Mammary epithelial cell (primary cell): ENCODE measurements at regions of chr4 and their contacts with region 1.

Region 1: DNA sequence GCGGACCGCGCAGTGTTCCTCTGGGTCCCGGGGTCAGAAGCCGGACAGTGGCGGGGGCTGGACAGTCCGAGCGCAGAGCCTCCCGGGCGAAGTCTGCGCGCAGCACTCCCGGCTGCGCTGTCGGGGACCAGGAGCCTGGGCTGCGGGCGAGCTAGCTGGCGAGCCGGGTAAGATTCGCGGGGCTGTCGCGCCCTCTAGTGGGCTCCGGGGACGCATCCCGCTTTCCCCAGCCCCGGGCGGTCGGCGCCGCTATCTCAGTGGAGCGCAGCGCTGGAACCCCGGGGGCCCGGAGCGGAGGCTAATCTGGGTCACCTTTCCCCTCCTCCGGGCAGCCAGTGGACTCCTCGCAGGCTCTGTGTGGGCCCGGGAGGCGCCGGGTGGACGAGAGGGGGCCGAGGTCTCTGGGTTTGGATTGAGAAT is 4.2 kb downstream of the PDGFRA start:
- DNase-seq: peak; percentile 81
- H3K4me3 ChIP-seq: peak overlapping the region; percentile 30 to 54 (median 52)
- H3K27ac ChIP-seq: no peak overlapping the region
- H3K4me1 ChIP-seq: peaks cover 21% of the 10 kb centered on the region
- H3K27me3 ChIP-seq: peaks cover 24% of the 10 kb centered on the region
- CTCF ChIP-seq: peak; percentile 36 to 88

Region 2: DNA sequence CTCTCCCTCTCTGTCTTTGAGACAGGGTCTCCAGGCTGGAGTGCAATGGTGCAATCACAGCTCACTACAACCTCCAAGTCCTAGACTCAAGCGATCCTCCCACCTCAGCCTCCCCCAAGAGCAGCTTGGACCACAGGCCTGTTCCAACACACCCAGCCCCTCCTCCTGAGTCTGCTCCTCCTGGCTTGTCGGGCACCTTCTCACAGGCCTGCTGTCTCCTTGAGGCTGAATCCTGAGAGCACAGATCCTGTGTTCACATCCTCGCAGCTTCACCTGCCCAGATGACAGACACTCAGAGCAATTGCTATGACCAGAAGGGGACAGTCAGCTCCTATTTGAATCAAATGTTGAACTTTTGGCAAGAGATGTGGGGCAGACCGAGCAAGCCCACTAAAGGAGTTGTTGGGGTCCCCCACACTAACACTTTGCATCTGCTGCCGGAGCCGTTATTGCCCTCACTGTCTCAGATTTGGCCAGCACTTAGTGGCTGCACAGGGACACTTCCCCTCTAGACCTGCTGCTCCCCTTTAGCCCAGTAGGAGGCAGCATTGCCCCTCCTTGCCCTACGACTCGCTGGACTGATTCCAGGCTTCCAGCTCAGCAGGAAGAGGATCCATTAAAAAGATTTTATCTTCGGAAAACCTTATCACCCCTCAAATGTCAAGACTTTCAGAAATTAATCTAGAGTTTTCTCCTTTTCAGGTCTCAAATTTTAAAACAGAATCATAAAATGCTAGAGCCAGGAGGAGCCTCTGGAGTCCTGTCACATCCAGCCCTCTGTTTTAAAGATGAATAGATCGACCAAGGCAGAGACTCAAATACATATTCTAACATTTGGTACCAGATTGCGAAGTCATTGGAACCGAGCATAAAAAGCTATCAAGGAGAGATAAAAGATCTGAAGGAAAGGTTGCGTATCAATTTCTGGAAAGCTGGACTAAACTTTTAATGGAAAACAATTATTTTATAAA is 1687.9 kb before region 1 on chr4:
- CTCF ChIA-PET with region 1: no interaction called
- dilution Hi-C with region 1: no loop called
- in situ Hi-C with region 1: no loop called
- intact Hi-C with region 1: loop called (anchors 5 kb)
- DNase-seq: peak; percentile 49
- H3K4me3 ChIP-seq: no peak overlapping the region
- H3K27ac ChIP-seq: no peak overlapping the region
- H3K4me1 ChIP-seq: peaks cover 16% of the 10 kb centered on the region
- H3K27me3 ChIP-seq: no peaks in the 10 kb centered on the region
- CTCF ChIP-seq: peak; percentile 98

Region 3: DNA sequence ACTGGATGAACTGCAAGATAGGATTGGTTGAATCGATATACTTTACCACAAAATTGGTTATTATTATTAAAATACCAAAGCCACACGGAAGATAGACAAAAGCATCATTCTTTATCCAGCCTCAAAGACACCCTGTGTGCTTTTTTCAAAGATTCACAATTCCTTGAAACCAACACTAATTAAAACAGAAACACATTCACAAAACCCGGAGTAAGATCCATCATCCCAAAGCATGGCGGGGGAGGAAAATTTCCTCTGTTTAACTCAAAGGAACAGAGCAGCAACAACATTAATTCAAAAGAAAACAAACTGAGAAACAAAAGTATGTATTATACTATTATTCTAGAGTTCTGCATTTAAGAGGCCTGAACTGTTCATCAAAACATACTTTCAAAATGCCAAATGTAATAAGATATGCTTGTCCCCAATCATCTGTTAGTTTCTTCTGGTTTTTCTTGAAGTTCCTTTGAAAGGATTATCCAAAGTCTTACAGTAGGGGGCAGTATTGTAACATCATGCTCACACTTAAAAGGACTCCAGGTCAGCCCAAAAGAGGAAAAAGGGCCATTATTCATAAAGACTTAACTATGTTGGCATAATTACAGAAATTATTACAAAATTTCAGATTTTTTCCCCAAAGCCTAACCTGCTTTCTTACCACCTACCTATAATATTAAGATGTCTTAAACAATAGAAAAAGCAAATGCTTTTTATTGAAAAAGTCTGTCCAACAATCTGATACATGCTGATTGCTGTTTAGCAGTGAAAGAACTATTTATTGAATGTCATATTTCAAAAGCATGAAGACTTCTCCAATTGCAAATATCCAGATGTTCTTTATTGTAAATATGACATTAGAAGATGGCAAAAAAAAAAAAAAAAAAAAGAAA is 1036.2 kb before region 1 on chr4:
- CTCF ChIA-PET with region 1: no interaction called
- dilution Hi-C with region 1: no loop called
- in situ Hi-C with region 1: loop called (anchors 5 to 10 kb)
- intact Hi-C with region 1: loop called (anchors 1 kb)
- DNase-seq: peak; percentile 47
- H3K4me3 ChIP-seq: no peak overlapping the region
- H3K27ac ChIP-seq: no peak overlapping the region
- H3K4me1 ChIP-seq: no peaks in the 10 kb centered on the region
- H3K27me3 ChIP-seq: no peaks in the 10 kb centered on the region
- CTCF ChIP-seq: peak; percentile 48 to 75

Region 4: DNA sequence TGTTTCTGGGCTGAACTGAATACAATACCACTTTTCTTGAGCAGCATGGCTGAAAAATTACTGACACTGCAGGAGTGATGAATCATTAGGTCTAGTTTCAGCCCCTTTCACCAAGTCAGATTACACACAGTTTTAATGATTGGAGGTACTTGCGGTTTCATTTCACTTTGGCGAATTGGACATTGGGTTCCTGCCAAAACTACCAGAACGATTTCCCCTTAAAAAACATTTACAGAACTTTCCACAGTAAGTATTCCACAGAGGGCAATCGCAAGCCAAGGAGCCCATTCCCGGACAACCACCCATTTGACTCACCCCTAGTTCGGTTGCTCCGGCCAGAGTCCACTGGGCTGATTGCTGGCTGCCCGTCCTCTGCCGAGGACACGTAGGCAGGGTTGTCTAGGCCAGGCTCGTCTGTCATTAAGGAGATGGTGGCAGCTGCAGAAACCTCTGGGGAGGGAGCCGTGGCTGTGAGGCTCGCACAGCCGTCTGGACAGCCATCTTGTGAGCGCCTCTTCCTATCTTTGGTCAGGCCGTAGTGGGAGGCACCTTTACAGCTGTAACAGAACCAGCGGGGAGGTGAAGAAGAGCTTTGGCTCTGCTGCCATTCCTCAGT is 725.5 kb before region 1 on chr4:
- CTCF ChIA-PET with region 1: no interaction called
- dilution Hi-C with region 1: no loop called
- in situ Hi-C with region 1: loop called in 1 of 2 experiments (anchors 25 kb)
- intact Hi-C with region 1: loop called (anchors 1 kb)
- DNase-seq: no peak
- H3K4me3 ChIP-seq: no peak overlapping the region
- H3K27ac ChIP-seq: no peak overlapping the region
- H3K4me1 ChIP-seq: no peaks in the 10 kb centered on the region
- H3K27me3 ChIP-seq: peaks cover 2% of the 10 kb centered on the region
- CTCF ChIP-seq: no peak

Region 5: DNA sequence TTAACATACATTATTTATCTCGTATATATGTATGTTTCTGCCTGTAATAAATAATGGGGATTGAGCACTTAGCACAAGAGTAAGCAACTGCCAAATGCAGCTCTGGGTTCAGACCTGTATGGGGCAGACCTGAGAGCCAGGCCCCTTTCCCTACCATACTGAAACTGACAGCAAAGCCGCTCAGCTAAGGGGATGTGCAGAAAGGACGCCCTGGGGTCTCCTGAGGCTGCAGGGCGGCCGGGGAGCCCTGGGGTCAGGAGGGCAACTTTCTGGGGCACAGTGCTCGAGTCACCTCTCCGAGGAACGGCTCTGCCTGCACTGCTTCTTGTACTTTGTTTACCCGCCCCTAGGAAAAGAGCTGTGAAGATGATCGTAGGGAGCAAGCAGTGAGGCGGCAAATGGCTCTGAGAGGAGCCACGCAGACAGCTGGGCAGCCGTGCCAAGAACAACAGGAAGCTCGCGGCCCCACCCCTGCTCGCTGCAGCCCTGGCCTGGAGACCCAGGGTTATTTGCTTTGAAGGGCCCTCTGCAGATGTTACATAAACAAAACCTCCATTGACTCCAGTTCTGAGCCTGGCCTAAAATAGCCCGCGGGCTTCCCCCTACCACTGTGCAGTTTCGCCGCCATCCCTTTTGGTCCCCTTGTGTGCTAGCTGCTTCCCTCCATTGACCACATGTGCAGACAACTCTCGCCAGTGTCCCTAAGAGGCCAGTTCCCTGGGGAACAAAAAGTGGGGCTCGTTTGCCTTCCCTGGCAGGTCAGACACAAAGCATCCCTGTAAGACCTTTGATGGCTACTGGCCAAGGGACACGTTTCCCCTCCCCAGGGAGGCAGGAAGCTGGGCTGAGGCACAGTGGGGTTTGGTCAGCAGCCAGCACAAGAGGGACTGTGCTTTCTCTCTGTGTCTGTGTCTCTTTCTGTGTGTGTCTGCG is 530.7 kb before region 1 on chr4:
- CTCF ChIA-PET with region 1: interaction called, 8 read pairs
- dilution Hi-C with region 1: no loop called
- in situ Hi-C with region 1: loop called (anchors 10 kb)
- intact Hi-C with region 1: loop called (anchors 1 kb)
- DNase-seq: peak; percentile 52
- H3K4me3 ChIP-seq: peak overlapping the region in 2 of 3 experiments; percentile 17 to 20
- H3K27ac ChIP-seq: no peak overlapping the region
- H3K4me1 ChIP-seq: peaks cover 11% of the 10 kb centered on the region
- H3K27me3 ChIP-seq: no peaks in the 10 kb centered on the region
- CTCF ChIP-seq: peak in 1 of 2 donors; percentile 7

Region 6: DNA sequence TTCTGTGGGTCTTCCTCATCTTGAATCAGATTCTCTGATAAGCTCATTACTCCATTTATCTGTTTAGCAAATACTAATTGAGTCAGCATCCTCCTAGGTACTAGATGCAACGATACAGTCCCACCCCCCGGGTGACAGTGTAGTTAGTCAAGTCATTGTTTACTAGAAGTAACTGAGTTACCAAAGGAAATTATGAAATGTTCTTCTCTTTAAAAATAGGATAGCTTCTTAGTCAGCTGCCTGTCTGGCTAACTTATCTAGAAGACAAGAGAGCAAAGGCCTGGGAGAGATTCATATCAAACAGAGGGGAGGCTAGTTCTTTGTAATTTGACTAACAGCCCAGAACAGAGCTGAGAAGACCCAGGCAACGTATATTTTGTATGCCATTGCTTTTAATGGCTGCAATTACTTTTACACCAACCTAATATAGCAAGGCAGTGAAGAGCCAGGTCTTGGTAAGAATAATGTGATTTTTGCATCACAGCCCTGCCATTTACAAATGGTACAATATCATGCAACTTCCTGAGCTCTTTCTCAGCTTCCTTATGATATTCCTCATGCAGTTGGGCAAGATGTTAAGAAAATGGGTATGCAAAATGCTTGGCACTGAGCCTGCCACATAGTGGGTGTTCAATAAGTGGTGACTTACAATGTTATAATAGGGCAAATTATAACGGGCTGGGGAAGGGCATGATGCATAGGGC is 318.8 kb before region 1 on chr4:
- CTCF ChIA-PET with region 1: interaction called, 18 read pairs
- dilution Hi-C with region 1: no loop called
- in situ Hi-C with region 1: loop called in 1 of 2 experiments (anchors 5 kb)
- intact Hi-C with region 1: no loop called
- DNase-seq: peak; percentile 97
- H3K4me3 ChIP-seq: no peak overlapping the region
- H3K27ac ChIP-seq: peak overlapping the region; percentile 99
- H3K4me1 ChIP-seq: peaks cover 69% of the 10 kb centered on the region
- H3K27me3 ChIP-seq: no peaks in the 10 kb centered on the region
- CTCF ChIP-seq: no peak

Region 7: DNA sequence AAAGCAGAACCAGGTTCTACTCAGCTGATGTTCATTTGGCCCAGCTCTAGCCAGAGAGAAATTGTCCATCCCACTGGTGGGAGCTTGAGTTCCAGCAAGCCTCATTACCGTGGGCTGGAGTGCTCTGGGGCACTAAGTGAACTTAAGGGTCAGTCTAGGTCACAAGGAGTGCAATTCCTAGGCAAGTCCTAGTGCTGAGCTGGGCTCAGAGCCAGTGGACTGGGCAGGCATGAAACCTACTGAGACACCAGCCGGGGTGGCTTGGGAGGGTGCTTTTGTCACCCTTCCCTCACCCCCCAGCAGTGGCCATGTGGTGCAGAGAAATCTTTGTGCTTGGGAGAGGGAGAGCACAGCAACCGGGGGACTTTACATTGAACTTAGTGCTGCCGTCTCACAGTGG is 94.0 kb before region 1 on chr4:
- CTCF ChIA-PET with region 1: no interaction called
- dilution Hi-C with region 1: no loop called
- in situ Hi-C with region 1: no loop called
- intact Hi-C with region 1: no loop called
- DNase-seq: no peak
- H3K4me3 ChIP-seq: no peak overlapping the region
- H3K27ac ChIP-seq: no peak overlapping the region
- H3K4me1 ChIP-seq: no peaks in the 10 kb centered on the region
- H3K27me3 ChIP-seq: no peaks in the 10 kb centered on the region
- CTCF ChIP-seq: no peak

Region 8: DNA sequence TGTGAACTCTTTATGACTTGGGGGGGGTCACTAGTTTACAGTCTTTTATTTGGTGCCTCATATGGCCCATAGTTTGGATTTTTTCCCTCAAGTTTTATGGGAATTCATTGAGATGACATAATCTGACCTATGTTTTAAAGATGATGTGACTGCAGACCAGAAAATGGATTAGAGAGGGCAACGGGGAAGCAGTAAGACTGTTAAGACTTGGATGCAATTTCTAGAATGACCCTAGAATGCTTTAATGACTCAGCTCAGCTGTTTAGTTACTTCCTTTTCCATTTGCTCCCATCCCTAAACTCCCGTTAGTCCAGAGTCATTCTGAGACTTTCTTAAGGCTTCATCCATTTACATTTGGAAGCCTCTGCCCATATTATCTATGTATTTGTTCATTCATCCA is 64.1 kb before region 1 on chr4:
- CTCF ChIA-PET with region 1: no interaction called
- dilution Hi-C with region 1: no loop called
- in situ Hi-C with region 1: no loop called
- intact Hi-C with region 1: no loop called
- DNase-seq: no peak
- H3K4me3 ChIP-seq: no peak overlapping the region
- H3K27ac ChIP-seq: no peak overlapping the region
- H3K4me1 ChIP-seq: peaks cover 19% of the 10 kb centered on the region
- H3K27me3 ChIP-seq: no peaks in the 10 kb centered on the region
- CTCF ChIP-seq: no peak

Region 9: GRCh38 chr4:54359919-54360650 is 126.8 kb after region 1 on chr4:
- CTCF ChIA-PET with region 1: no interaction called
- dilution Hi-C with region 1: no loop called
- in situ Hi-C with region 1: no loop called
- intact Hi-C with region 1: no loop called
- DNase-seq: no peak
- H3K4me3 ChIP-seq: no peak overlapping the region
- H3K27ac ChIP-seq: no peak overlapping the region
- H3K4me1 ChIP-seq: no peaks in the 10 kb centered on the region
- H3K27me3 ChIP-seq: no peaks in the 10 kb centered on the region
- CTCF ChIP-seq: no peak

Region 10: DNA sequence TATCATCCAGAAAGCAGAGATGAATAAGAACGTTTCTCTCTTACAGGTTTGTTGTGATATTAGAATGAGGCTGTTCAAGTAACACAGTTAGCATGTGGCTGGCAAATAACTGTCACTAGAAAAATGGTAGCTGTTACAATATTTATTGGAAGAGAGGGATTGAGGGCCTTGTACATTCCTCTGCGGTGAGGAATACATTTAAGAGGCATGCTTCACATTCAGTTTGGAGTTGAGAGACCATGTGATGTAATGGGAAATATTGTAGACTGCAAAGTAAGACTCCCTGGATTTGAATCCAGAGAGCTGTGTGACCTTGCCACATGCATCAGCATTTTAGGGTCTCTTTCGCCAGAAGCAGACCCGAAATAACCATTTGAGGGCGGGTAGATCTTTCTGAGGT is 319.7 kb after region 1 on chr4:
- CTCF ChIA-PET with region 1: no interaction called
- dilution Hi-C with region 1: no loop called
- in situ Hi-C with region 1: no loop called
- intact Hi-C with region 1: no loop called
- DNase-seq: no peak
- H3K4me3 ChIP-seq: no peak overlapping the region
- H3K27ac ChIP-seq: no peak overlapping the region
- H3K4me1 ChIP-seq: peaks cover 2% of the 10 kb centered on the region
- H3K27me3 ChIP-seq: no peaks in the 10 kb centered on the region
- CTCF ChIP-seq: no peak